ENCODE measurements at regions of chr11 and their contacts with region 1.

Region 1: DNA sequence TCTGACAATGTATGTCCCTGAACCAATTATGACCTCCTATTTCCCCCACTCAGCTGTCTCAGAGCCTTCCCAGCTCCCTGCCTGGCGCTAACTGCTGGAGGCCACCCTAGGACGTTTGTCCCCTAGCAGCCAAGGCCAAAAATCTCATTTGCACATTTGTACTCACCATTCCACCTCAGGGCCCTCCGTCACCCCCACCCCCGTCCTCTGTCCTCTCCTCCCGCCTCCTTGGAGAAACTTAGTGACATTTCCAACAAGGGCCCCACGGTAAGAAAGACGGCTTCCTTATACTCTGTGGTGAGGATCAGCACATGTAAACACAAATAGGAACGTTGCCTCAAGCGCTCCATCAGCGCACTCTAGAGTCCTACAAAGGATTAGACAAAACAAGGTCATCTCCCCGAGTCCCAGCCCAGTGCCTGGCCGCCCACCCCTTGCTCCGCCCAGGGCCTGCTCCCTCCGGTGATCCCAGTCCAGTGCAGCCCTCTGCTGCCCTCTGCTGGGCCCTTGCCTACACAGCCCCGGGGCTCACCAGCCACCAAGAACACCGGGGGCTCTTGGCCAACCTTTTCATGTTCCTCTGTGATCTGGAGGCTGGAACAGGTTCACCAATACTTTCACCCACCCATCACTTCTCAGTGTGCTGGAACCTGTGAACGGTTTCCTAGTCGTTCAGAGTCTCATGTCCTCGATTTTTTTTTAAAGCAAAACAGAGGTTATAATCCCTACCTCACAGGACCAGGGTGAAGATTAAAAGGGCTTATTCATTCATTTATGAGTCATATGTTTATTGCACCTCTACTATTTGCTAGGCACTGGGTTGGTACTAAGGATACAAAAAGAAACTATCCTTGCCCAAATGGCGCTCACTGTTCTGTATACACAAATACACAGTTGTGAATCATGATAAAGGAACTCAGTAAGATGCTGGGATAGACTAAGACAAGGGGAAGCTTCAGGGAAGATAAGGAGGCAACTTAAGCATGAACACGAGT is 15.3 kb upstream of the CTR9 start:
- DNase-seq: peak; percentile 91

Region 2: GRCh38 chr11:10623797-10624761 is 111.7 kb before region 1 on chr11:
- CTCF ChIA-PET with region 1: interaction called, 13 read pairs
- POLR2A ChIA-PET with region 1: no interaction called
- DNase-seq: peak; percentile 71